ENCODE measurements at regions of chr14 and their contacts with region 1.

Region 1: GRCh38 chr14:55212634-55213033 is 21.2 kb upstream of the DLGAP5 start:
- DNase-seq: no peak
- ATAC-seq: no peak
- H3K4me3 ChIP-seq: no peak overlapping the region
- H3K27ac ChIP-seq: no peak overlapping the region
- H3K4me1 ChIP-seq: no peaks in the 10 kb centered on the region
- H3K27me3 ChIP-seq: no peaks in the 10 kb centered on the region
- CTCF ChIP-seq: no peak
- EP300 ChIP-seq: no peak
- POLR2A ChIP-seq: no peak
- RAD21 ChIP-seq: no peak

Region 2: DNA sequence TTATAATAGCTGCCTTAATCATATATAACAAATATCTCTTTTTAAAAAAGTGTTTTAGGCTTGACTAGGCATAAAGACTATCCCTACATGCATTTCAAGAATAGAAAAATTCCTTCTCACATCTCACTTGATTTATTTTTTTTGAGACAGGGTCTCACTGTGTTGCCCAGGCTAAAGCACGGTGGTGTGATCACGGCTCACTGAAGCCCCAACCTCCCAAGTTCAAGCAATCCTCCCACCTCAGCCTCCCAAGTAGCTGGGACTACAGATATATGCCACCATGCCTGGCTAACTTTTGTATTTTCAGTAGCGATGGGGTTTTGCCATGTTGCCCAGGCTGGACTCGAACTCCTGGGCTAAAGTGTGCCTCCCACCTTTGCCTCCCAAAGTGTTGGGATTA is 245.1 kb before region 1 on chr14:
- CTCF ChIA-PET with region 1: no interaction called
- POLR2A ChIA-PET with region 1: no interaction called
- RAD21 ChIA-PET with region 1: no interaction called
- SMC1A ChIA-PET with region 1: no interaction called
- in situ Hi-C with region 1: no loop called
- intact Hi-C with region 1: no loop called
- DNase-seq: no peak
- ATAC-seq: no peak
- H3K4me3 ChIP-seq: no peak overlapping the region
- H3K27ac ChIP-seq: no peak overlapping the region
- H3K4me1 ChIP-seq: no peaks in the 10 kb centered on the region
- H3K27me3 ChIP-seq: no peaks in the 10 kb centered on the region
- CTCF ChIP-seq: no peak
- EP300 ChIP-seq: no peak
- POLR2A ChIP-seq: no peak
- RAD21 ChIP-seq: no peak

Region 3: DNA sequence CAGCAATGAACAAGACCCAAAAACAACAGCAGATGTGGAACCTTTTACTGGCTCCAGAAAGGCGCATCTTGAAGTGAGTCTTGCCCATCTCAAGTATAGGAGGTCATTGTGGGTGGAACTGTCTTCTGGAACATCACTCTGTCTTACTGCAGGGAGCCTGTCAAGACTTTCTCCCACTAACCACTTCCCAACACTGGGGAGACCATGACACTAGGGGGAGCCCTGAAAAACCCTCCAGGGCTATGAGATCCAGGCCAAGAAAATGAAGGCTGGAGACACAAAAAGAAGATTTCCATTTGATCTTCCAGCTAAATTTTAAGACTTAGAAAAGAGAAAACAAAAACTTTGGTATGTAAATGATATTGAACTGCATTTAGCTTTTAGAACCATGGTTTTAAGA is 212.5 kb after region 1 on chr14:
- CTCF ChIA-PET with region 1: interaction called, 31 read pairs
- POLR2A ChIA-PET with region 1: no interaction called
- RAD21 ChIA-PET with region 1: interaction called, 6 read pairs
- SMC1A ChIA-PET with region 1: interaction called, 11 read pairs
- in situ Hi-C with region 1: no loop called
- intact Hi-C with region 1: loop called (anchors 1 kb)
- DNase-seq: no peak
- ATAC-seq: peak; percentile 28; the same call in 1 of the 3 replicates
- H3K4me3 ChIP-seq: no peak overlapping the region
- H3K27ac ChIP-seq: no peak overlapping the region
- H3K4me1 ChIP-seq: peaks cover 3% of the 10 kb centered on the region; the same call in 1 of the 2 replicates
- H3K27me3 ChIP-seq: no peaks in the 10 kb centered on the region
- CTCF ChIP-seq: peak; percentile 12 to 32 (median 13); a peak in 3 of 6 replicates
- EP300 ChIP-seq: no peak
- POLR2A ChIP-seq: no peak
- RAD21 ChIP-seq: no peak

Region 4: DNA sequence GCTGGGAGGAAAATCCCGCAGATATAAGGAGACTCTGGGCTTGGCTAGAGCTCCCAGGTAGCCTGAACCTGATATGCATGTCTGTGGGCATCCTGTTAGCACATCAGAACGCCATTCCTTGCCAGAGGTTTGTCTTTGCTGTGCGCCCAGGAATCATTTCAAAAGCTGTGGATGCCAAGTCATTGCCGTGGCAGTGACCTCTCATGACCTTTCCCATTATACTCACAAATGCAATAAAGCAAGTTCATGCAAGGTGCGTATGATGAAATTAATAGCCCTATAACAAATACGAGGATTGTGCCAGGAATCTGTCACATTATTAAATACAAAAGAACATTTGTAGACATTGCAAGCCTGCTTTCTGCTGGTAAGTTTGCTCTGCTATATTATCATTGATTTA is 676.5 kb after region 1 on chr14:
- CTCF ChIA-PET with region 1: no interaction called
- POLR2A ChIA-PET with region 1: no interaction called
- RAD21 ChIA-PET with region 1: no interaction called
- SMC1A ChIA-PET with region 1: no interaction called
- in situ Hi-C with region 1: no loop called
- intact Hi-C with region 1: no loop called
- DNase-seq: no peak
- ATAC-seq: no peak
- H3K4me3 ChIP-seq: no peak overlapping the region
- H3K27ac ChIP-seq: no peak overlapping the region
- H3K4me1 ChIP-seq: no peaks in the 10 kb centered on the region
- H3K27me3 ChIP-seq: no peaks in the 10 kb centered on the region; a peak in 1 of 4 replicates
- CTCF ChIP-seq: no peak
- EP300 ChIP-seq: no peak
- POLR2A ChIP-seq: no peak
- RAD21 ChIP-seq: no peak

Measured in GM12878 (cell line).